CD8-positive, alpha-beta T cell (primary cell): ENCODE measurements at regions of chr1 and their contacts with region 1.

Region 1: GRCh38 chr1:40040511-40041465 is at the start of gene CAP1:
- DNase-seq: peak; percentile 99 to 100 (median 100)
- ATAC-seq: peak; percentile 89
- H3K4me3 ChIP-seq: peak within 1 kb of the TSS; percentile 99
- H3K4me3 Mint-ChIP-seq: peak within 1 kb of the TSS; percentile 89
- H3K27ac ChIP-seq: peak within 1 kb of the TSS; percentile 92 to 94
- H3K27ac Mint-ChIP-seq: peak within 1 kb of the TSS; percentile 93
- H3K4me1 ChIP-seq: peaks cover 71% of the 10 kb centered on the region
- H3K4me1 Mint-ChIP-seq: peaks cover 70% of the 10 kb centered on the region
- H3K27me3 ChIP-seq: no peaks in the 10 kb centered on the region
- H3K27me3 Mint-ChIP-seq: no peaks in the 10 kb centered on the region
- CTCF ChIP-seq: no peak
- total RNA-seq, gene CAP1: 123 to 126 TPM

Region 2: DNA sequence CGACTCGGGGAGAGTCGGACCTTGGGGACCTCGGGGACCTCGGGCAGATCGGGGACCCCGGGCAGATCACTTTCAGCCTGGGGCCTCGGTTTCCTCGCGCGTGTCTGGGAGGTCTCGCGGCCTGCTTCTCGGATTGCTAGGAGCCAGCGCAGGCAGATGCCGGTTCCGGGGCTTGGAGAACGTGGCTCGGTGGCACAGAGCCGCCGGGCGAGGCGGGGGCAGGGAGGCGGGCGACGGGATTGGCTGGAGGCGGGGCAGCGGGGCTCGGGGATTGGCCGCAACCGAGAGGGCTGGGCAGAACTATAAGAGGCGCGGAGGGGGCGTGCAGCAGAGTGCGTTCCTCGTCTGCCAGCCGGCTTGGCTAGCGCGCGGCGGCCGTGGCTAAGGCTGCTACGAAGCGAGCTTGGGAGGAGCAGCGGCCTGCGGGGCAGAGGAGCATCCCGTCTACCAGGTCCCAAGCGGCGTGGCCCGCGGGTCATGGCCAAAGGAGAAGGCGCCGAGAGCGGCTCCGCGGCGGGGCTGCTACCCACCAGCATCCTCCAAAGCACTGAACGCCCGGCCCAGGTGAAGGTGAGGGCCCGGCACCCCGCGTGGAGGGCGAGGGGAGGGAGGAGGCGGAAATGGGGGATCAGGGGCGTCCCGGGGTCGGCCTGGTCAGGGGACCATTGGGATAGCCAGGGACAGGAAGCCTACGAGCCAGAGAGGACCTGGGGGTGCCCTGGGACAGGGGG is 85.8 kb before region 1 on chr1 and contains the start of gene MFSD2A:
- CTCF ChIA-PET with region 1: no interaction called
- POLR2A ChIA-PET with region 1: no interaction called
- intact Hi-C with region 1: loop called in 1 of 2 experiments (anchors 1 kb)
- DNase-seq: peak; percentile 71 to 91 (median 86)
- ATAC-seq: peak; percentile 96
- H3K4me3 ChIP-seq: peak within 1 kb of the TSS; percentile 68 to 82
- H3K4me3 Mint-ChIP-seq: peak within 1 kb of the TSS; percentile 94
- H3K27ac ChIP-seq: no peak within 1 kb of the TSS
- H3K27ac Mint-ChIP-seq: peak within 1 kb of the TSS; percentile 55
- H3K4me1 ChIP-seq: peaks cover 15% of the 10 kb centered on the region
- H3K4me1 Mint-ChIP-seq: peaks cover 14% of the 10 kb centered on the region
- H3K27me3 ChIP-seq: no peaks in the 10 kb centered on the region
- H3K27me3 Mint-ChIP-seq: no peaks in the 10 kb centered on the region
- CTCF ChIP-seq: no peak
- total RNA-seq, gene MFSD2A: 5.9 to 6.4 TPM

Region 3: GRCh38 chr1:40078512-40079333 is 37.9 kb after region 1 on chr1:
- CTCF ChIA-PET with region 1: interaction called, 7 read pairs
- POLR2A ChIA-PET with region 1: interaction called, 6 read pairs
- intact Hi-C with region 1: loop called in 1 of 2 experiments (anchors 5 kb)
- DNase-seq: peak in 8 of 9 experiments; percentile 13 to 77 (median 50)
- ATAC-seq: peak; percentile 89
- H3K4me3 ChIP-seq: no peak overlapping the region
- H3K4me3 Mint-ChIP-seq: no peak overlapping the region
- H3K27ac ChIP-seq: no peak overlapping the region
- H3K27ac Mint-ChIP-seq: peak overlapping the region; percentile 56
- H3K4me1 ChIP-seq: peaks cover 4% of the 10 kb centered on the region
- H3K4me1 Mint-ChIP-seq: peaks cover 11% of the 10 kb centered on the region
- H3K27me3 ChIP-seq: no peaks in the 10 kb centered on the region
- H3K27me3 Mint-ChIP-seq: no peaks in the 10 kb centered on the region
- CTCF ChIP-seq: peak; percentile 88

Region 4: DNA sequence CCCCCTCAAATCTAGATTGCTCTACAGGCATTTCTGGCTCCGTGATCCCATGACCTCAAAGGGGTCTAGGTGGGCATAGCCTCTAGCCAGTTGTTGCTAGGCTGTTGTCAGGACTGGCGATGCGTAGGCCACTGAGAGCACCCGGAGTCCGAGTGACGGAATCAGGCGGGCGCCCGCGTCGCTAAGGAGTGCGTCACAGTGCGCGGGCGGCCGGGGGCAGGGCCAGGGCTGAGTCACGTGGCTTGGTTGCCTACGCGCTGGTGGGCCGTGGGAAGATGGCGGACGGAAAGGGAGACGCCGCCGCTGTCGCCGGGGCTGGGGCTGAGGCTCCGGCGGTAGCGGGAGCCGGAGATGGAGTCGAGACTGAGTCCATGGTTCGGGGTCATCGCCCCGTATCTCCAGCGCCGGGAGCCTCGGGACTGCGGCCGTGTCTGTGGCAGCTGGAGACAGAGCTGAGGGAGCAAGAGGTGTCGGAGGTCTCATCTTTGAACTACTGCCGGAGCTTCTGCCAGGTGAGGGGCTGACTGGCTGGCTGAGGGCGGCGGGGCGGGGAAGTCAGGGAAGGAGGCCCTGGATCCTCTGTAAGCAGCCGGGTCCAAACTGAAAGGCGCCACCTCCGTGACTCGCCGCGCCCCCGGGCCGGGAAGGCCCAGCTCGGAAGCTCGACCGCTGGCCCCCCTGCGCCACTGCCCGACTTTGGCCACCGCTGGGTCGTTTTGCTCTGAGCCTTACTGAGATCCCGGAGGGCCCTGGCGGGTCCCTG is 120.5 kb after region 1 on chr1 and contains the start of gene RLF:
- CTCF ChIA-PET with region 1: no interaction called
- POLR2A ChIA-PET with region 1: no interaction called
- intact Hi-C with region 1: loop called (anchors 1 to 2 kb)
- DNase-seq: peak; percentile 90 to 97 (median 94)
- ATAC-seq: peak; percentile 95
- H3K4me3 ChIP-seq: peak within 1 kb of the TSS; percentile 96 to 100
- H3K4me3 Mint-ChIP-seq: no peak within 1 kb of the TSS
- H3K27ac ChIP-seq: peak within 1 kb of the TSS; percentile 96 to 98
- H3K27ac Mint-ChIP-seq: no peak within 1 kb of the TSS
- H3K4me1 ChIP-seq: peaks cover 46% of the 10 kb centered on the region
- H3K4me1 Mint-ChIP-seq: peaks cover 22% of the 10 kb centered on the region
- H3K27me3 ChIP-seq: no peaks in the 10 kb centered on the region
- H3K27me3 Mint-ChIP-seq: no peaks in the 10 kb centered on the region
- CTCF ChIP-seq: no peak
- total RNA-seq, gene RLF: 62.2 to 62.6 TPM

Region 5: GRCh38 chr1:40385437-40386358 is 344.9 kb after region 1 on chr1:
- CTCF ChIA-PET with region 1: no interaction called
- POLR2A ChIA-PET with region 1: no interaction called
- intact Hi-C with region 1: loop called in 1 of 2 experiments (anchors 2 kb)
- DNase-seq: peak in 7 of 9 experiments; percentile 34 to 96 (median 64)
- ATAC-seq: peak; percentile 66
- H3K4me3 ChIP-seq: peak overlapping the region; percentile 29 to 50
- H3K4me3 Mint-ChIP-seq: peak overlapping the region; percentile 86
- H3K27ac ChIP-seq: peak overlapping the region; percentile 93 to 97
- H3K27ac Mint-ChIP-seq: peak overlapping the region; percentile 100
- H3K4me1 ChIP-seq: peaks cover 82% of the 10 kb centered on the region
- H3K4me1 Mint-ChIP-seq: peaks cover 92% of the 10 kb centered on the region
- H3K27me3 ChIP-seq: no peaks in the 10 kb centered on the region
- H3K27me3 Mint-ChIP-seq: no peaks in the 10 kb centered on the region
- CTCF ChIP-seq: no peak